CD14-positive monocyte (primary cell): ENCODE measurements at regions of chr17 and their contacts with region 1.

Region 1: DNA sequence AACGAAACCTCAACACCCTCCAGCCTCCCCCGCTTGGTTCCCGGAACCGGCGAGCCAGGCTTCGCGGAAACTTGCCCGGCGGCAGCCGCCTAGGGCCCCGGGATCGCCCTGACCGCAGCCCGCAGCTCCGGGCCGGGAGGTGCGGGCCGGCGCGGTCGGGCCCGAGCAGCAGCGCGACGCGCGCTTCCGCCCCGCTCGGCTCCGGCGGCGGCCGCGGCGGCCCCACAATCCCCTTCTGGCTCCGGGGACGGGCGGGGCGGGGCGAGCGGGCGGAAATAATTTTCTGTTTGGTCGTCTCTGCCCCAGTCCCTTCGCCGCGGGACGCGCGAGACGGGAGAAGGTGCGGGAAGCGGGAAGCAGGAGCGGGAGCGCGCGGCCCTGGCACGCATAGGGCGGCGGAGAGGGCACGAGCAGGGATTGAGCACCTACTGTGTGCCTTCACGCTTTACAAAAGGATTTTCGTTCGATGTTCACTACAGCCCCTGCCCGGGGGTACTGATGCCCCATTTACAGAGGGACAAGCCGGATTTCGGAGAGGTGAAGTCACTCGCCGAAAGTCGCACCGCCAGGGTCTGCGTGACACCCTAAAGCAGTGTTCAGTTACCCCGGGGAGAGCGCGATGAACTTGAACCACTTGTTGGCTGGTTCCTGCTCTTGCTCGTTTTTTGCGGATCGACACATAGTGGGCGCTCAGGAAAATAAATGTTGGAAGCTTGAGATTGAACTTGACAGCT is 2.7 kb upstream of the MLLT6 start:
- DNase-seq: peak; percentile 76 to 81 (median 79)
- H3K4me3 ChIP-seq: peak overlapping the region; percentile 86 to 93 (median 90)
- H3K4me3 Mint-ChIP-seq: peak overlapping the region; percentile 94 to 98
- H3K27ac ChIP-seq: peak overlapping the region; percentile 99 to 100
- H3K27ac Mint-ChIP-seq: peak overlapping the region; percentile 97 to 100 (median 100)
- H3K4me1 ChIP-seq: peaks cover 65 to 66% of the 10 kb centered on the region in 2 donors
- H3K4me1 Mint-ChIP-seq: peaks cover 59% of the 10 kb centered on the region
- H3K27me3 ChIP-seq: peaks cover 0 to 6% of the 10 kb centered on the region in 2 donors
- H3K27me3 Mint-ChIP-seq: peaks cover 18 to 25% (median 20%) of the 10 kb centered on the region in 3 donors
- CTCF ChIP-seq: no peak

Region 2: GRCh38 chr17:38579934-38580333 is 122.4 kb before region 1 on chr17:
- intact Hi-C with region 1: no loop called
- DNase-seq: no peak
- H3K4me3 ChIP-seq: no peak overlapping the region
- H3K4me3 Mint-ChIP-seq: peak overlapping the region in 1 of 2 donors; percentile 84
- H3K27ac ChIP-seq: no peak overlapping the region
- H3K27ac Mint-ChIP-seq: peak overlapping the region in 1 of 7 donors; percentile 38
- H3K4me1 ChIP-seq: peaks cover 0 to 3% of the 10 kb centered on the region in 2 donors
- H3K4me1 Mint-ChIP-seq: peaks cover 6% of the 10 kb centered on the region
- H3K27me3 ChIP-seq: peaks cover 61 to 96% of the 10 kb centered on the region in 2 donors
- H3K27me3 Mint-ChIP-seq: peaks cover 85 to 97% (median 91%) of the 10 kb centered on the region in 3 donors
- CTCF ChIP-seq: no peak

Region 3: DNA sequence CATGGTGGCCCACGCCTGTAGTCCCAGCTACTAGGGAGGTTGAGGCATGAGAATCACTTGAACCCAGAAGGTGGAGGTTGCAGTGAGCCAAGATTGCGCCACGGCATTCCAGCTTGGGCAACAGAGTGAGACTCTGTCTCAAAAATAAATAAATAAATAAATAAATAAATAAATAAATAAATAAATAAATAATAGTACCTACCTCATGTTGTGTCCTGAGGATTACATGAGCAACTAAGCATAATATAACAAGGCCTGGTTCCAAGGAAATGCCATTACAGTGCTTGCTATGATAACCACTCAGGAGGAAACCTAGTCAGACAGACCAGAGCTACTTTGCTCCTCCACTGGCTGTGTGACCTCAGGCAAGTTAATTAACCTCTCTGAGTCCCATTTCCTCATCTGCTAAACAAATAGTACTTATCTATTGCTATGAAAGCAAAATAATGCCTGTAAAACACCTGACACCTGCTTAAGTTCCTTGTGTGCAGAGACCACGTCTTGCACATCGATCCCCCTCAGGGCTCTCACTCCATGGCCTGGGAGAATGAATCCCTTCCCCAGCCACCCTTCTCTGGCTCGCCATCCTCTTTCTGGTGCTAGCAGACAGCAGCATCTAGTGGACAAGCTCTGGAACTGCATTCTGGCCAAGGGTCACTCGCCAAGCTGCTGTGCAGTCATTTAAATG is 35.1 kb before region 1 on chr17:
- intact Hi-C with region 1: no loop called
- DNase-seq: peak; percentile 61 to 72 (median 69)
- H3K4me3 ChIP-seq: no peak overlapping the region
- H3K4me3 Mint-ChIP-seq: peak overlapping the region in 1 of 2 donors; percentile 73
- H3K27ac ChIP-seq: no peak overlapping the region
- H3K27ac Mint-ChIP-seq: no peak overlapping the region
- H3K4me1 ChIP-seq: peaks cover 0 to under 1% of the 10 kb centered on the region in 2 donors
- H3K4me1 Mint-ChIP-seq: peaks cover 12% of the 10 kb centered on the region
- H3K27me3 ChIP-seq: peaks cover 39 to 57% of the 10 kb centered on the region in 2 donors
- H3K27me3 Mint-ChIP-seq: peaks cover 56 to 79% (median 62%) of the 10 kb centered on the region in 3 donors
- CTCF ChIP-seq: peak; percentile 100

Region 4: DNA sequence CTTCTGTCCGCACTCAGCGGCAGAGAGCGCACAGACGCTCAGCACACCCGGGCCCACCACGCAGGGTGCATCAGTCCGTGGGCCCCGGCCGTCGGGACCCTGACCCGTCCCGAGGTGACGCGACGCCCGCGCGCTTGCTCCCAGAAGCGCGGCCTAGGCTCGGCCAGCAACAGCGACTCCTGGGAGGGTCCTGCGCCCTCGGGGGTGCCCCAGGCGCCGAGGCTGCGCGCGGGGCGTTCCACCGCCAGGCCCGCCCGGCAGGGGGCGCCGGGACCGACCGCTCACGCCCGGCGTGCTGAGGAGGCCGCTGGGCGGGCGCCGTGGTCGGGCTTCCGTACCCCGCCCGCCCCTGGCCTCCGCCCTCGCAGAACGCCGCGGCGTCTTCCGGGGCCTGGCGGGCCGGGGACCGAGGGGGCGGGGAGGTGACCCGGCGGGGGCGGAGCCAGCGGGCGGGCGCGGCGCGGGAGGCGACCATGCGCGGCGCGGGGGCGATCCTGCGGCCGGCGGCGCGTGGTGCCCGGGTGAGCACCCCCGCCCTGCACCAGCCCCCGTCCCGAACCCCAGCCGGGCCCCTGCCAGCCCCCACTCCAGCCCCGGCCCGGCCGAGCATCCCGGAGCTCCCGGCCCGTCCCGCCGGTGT is 27.7 kb after region 1 on chr17 and contains the start of gene CISD3:
- intact Hi-C with region 1: loop called in 1 of 2 experiments (anchors 2 kb)
- DNase-seq: peak; percentile 80 to 84 (median 84)
- H3K4me3 ChIP-seq: peak within 1 kb of the TSS; percentile 66 to 94 (median 89)
- H3K4me3 Mint-ChIP-seq: peak within 1 kb of the TSS; percentile 88 to 94
- H3K27ac ChIP-seq: peak within 1 kb of the TSS; percentile 16 to 81
- H3K27ac Mint-ChIP-seq: peak within 1 kb of the TSS; percentile 78 to 93 (median 89)
- H3K4me1 ChIP-seq: peaks cover 47 to 50% of the 10 kb centered on the region in 2 donors
- H3K4me1 Mint-ChIP-seq: peaks cover 53% of the 10 kb centered on the region
- H3K27me3 ChIP-seq: no peaks in the 10 kb centered on the region
- H3K27me3 Mint-ChIP-seq: peaks cover 0 to 8% (median 0%) of the 10 kb centered on the region in 3 donors
- CTCF ChIP-seq: peak; percentile 78
- polyA plus RNA-seq, gene CISD3: 7.1 to 61.2 (median 53.4) TPM

Region 5: GRCh38 chr17:38748149-38748891 is 46.0 kb after region 1 on chr17 and contains the start of gene PCGF2:
- intact Hi-C with region 1: no loop called
- DNase-seq: no peak
- H3K4me3 ChIP-seq: peak within 1 kb of the TSS; percentile 56 to 98 (median 63)
- H3K4me3 Mint-ChIP-seq: peak within 1 kb of the TSS; percentile 86 to 98
- H3K27ac ChIP-seq: no peak within 1 kb of the TSS
- H3K27ac Mint-ChIP-seq: no peak within 1 kb of the TSS
- H3K4me1 ChIP-seq: peaks cover 59 to 65% of the 10 kb centered on the region in 2 donors
- H3K4me1 Mint-ChIP-seq: peaks cover 54% of the 10 kb centered on the region
- H3K27me3 ChIP-seq: peaks cover 21 to 59% of the 10 kb centered on the region in 2 donors
- H3K27me3 Mint-ChIP-seq: peaks cover 55 to 77% (median 61%) of the 10 kb centered on the region in 3 donors
- CTCF ChIP-seq: no peak
- polyA plus RNA-seq, gene PCGF2: 0.60 TPM in 1 of 3 donors, not detected in the others

Region 6: DNA sequence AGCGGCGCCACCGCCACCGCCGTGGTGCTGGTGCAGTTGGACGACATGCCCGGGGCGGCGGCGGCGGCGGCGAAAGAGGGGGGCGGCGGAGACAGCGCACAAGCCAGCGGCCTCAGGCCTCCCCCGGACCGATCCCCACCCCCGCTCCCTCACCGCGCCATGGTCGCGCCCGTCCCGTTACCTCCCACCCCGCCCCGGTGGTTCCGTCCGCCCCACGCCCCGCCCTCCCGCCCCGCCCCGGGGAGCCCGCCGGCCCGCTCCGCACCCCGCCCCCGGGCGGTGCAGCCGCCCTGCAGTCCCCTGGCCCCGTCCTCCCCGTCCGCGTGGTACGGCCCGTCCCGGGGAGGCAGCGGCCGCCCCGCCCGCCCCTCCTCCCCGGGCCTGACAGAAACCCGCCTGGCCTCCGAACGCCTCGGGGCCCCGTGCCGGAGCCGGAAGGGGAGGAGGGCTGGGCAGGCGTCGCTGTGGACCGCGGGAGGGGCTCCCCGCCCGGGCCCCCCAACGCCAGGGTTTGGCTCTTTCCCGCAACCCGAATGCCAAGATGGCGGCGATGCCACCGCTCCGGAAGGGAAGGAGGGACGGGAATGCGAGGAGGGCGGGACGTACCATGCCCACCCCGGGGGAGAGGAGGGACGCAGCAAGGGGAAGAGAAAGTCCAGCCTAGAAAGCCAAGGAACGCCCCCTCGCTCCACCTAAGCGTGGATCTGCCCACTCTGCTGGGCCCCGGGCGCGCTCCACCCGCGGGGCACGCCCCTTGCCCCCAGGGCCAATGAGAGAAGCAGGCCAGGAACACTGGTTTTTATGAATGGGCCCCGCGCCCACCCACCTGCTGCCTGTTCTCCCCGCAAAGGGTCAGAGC is 97.3 kb after region 1 on chr17 and contains the start of gene PIP4K2B:
- intact Hi-C with region 1: loop called in 1 of 2 experiments (anchors 5 kb)
- DNase-seq: peak; percentile 96 to 97 (median 97)
- H3K4me3 ChIP-seq: peak within 1 kb of the TSS; percentile 73 to 97 (median 87)
- H3K4me3 Mint-ChIP-seq: peak within 1 kb of the TSS; percentile 96 to 98
- H3K27ac ChIP-seq: peak within 1 kb of the TSS; percentile 88 to 93
- H3K27ac Mint-ChIP-seq: peak within 1 kb of the TSS; percentile 84 to 94 (median 91)
- H3K4me1 ChIP-seq: peaks cover 25 to 27% of the 10 kb centered on the region in 2 donors
- H3K4me1 Mint-ChIP-seq: peaks cover 32% of the 10 kb centered on the region
- H3K27me3 ChIP-seq: no peaks in the 10 kb centered on the region
- H3K27me3 Mint-ChIP-seq: no peaks in the 10 kb centered on the region
- CTCF ChIP-seq: no peak
- polyA plus RNA-seq, gene PIP4K2B: 4.4 to 20.2 (median 4.6) TPM